IMR-90 (cell line): ENCODE measurements at regions of chr6 and their contacts with region 1.

Region 1: GRCh38 chr6:151330134-151330696 is 61.1 kb downstream of the ZBTB2 start:
- DNase-seq: peak; percentile 88
- ATAC-seq: peak; percentile 66
- H3K4me3 ChIP-seq: no peak overlapping the region
- H3K27ac ChIP-seq: no peak overlapping the region
- H3K4me1 ChIP-seq: peaks cover 5% of the 10 kb centered on the region; the same call in 1 of the 2 replicates
- H3K27me3 ChIP-seq: no peaks in the 10 kb centered on the region
- CTCF ChIP-seq: no peak
- POLR2A ChIP-seq: no peak
- RAD21 ChIP-seq: no peak

Region 2: GRCh38 chr6:150969901-150970300 is 360.3 kb before region 1 on chr6:
- CTCF ChIA-PET with region 1: no interaction called
- POLR2A ChIA-PET with region 1: no interaction called
- dilution Hi-C with region 1: no loop called
- in situ Hi-C with region 1: no loop called
- intact Hi-C with region 1: loop called (anchors 5 kb)
- DNase-seq: no peak
- ATAC-seq: no peak
- H3K4me3 ChIP-seq: no peak overlapping the region
- H3K27ac ChIP-seq: no peak overlapping the region
- H3K4me1 ChIP-seq: peaks cover 4% of the 10 kb centered on the region; the same call in 1 of the 2 replicates
- H3K27me3 ChIP-seq: no peaks in the 10 kb centered on the region
- CTCF ChIP-seq: no peak
- POLR2A ChIP-seq: no peak
- RAD21 ChIP-seq: no peak

Region 3: GRCh38 chr6:151993364-151993763 is 663.1 kb after region 1 on chr6:
- CTCF ChIA-PET with region 1: no interaction called
- POLR2A ChIA-PET with region 1: no interaction called
- dilution Hi-C with region 1: no loop called
- in situ Hi-C with region 1: no loop called
- intact Hi-C with region 1: no loop called
- DNase-seq: no peak
- ATAC-seq: no peak
- H3K4me3 ChIP-seq: no peak overlapping the region
- H3K27ac ChIP-seq: no peak overlapping the region
- H3K4me1 ChIP-seq: no peaks in the 10 kb centered on the region
- H3K27me3 ChIP-seq: no peaks in the 10 kb centered on the region
- CTCF ChIP-seq: no peak
- POLR2A ChIP-seq: no peak
- RAD21 ChIP-seq: no peak